IMR-90 (cell line): ENCODE measurements at regions of chr6 and their contacts with region 1.

Region 1: GRCh38 chr6:163413345-163414116 is 987 bp upstream of the QKI start:
- DNase-seq: peak; percentile 90
- ATAC-seq: peak; percentile 79
- H3K4me3 ChIP-seq: peak overlapping the region; percentile 100
- H3K27ac ChIP-seq: peak overlapping the region; percentile 78
- H3K4me1 ChIP-seq: peaks cover 2% of the 10 kb centered on the region; the same call in 1 of the 2 replicates
- H3K27me3 ChIP-seq: no peaks in the 10 kb centered on the region
- CTCF ChIP-seq: no peak
- POLR2A ChIP-seq: no peak; the same call in 1 of the 2 replicates
- RAD21 ChIP-seq: no peak

Region 2: DNA sequence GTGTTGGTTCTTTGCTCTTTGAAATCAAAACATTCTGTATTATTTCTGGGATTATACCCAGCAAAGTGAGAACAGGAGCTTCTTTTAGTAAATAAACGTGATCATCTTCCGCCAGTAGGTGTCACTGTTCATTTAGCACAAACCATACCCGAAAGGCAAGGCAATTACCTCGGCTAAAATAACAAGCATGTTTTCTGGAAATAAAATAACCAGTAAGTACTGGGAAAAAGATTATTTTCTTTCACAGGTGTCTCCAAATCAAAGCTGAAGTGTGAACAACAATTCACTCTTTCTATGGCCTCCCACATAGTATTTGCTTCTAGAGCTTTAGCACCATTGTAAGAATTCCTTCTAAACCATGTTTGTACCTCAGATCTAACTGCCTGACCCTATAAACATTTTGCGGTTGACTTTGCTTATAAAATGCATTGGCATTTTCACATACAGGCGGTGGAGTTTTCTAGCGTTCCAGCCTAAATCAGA is 1995.0 kb before region 1 on chr6:
- CTCF ChIA-PET with region 1: no interaction called
- POLR2A ChIA-PET with region 1: no interaction called
- dilution Hi-C with region 1: no loop called
- in situ Hi-C with region 1: loop called (anchors 25 kb)
- intact Hi-C with region 1: no loop called
- DNase-seq: peak; percentile 85
- ATAC-seq: peak; percentile 80
- H3K4me3 ChIP-seq: no peak overlapping the region
- H3K27ac ChIP-seq: no peak overlapping the region
- H3K4me1 ChIP-seq: peaks cover 2% of the 10 kb centered on the region; the same call in 1 of the 2 replicates
- H3K27me3 ChIP-seq: no peaks in the 10 kb centered on the region
- CTCF ChIP-seq: peak; percentile 74
- POLR2A ChIP-seq: no peak
- RAD21 ChIP-seq: peak; percentile 78

Region 3: DNA sequence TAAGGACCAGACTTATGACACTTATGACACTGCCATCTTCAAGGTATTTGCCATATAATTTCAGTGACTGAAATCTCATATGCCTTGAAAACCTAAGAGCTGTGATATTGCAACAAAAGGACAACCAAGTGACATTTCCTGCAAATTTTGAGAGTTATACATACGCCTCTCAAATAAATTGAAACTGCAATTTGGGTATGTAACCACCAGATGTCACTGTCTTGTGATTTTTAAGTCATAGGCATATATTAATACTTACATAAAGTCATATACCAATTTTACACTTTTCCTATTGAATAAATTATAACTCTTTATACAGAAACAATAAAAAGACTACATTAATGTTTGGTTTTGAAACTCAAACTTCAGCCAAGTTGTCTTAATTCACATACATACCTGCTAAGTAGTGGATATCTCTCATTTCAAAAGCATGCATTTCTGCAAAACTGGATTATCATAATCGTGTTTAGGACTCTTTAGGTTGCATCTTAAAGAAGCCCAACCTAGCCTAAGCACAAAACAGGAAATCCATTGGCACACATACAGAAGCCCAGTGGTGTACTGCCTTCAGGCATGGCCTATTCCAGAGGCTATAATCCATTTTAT is 505.6 kb before region 1 on chr6:
- CTCF ChIA-PET with region 1: no interaction called
- POLR2A ChIA-PET with region 1: no interaction called
- dilution Hi-C with region 1: no loop called
- in situ Hi-C with region 1: no loop called
- intact Hi-C with region 1: loop called (anchors 2 kb)
- DNase-seq: peak; percentile 45
- ATAC-seq: no peak
- H3K4me3 ChIP-seq: no peak overlapping the region
- H3K27ac ChIP-seq: no peak overlapping the region
- H3K4me1 ChIP-seq: no peaks in the 10 kb centered on the region
- H3K27me3 ChIP-seq: no peaks in the 10 kb centered on the region
- CTCF ChIP-seq: peak; percentile 35
- POLR2A ChIP-seq: no peak
- RAD21 ChIP-seq: peak; percentile 5; the same call in 1 of the 2 replicates

Region 4: GRCh38 chr6:163185744-163186143 is 227.8 kb before region 1 on chr6:
- CTCF ChIA-PET with region 1: no interaction called
- POLR2A ChIA-PET with region 1: interaction called, 13 read pairs
- dilution Hi-C with region 1: no loop called
- in situ Hi-C with region 1: no loop called
- intact Hi-C with region 1: no loop called
- DNase-seq: no peak
- ATAC-seq: no peak
- H3K4me3 ChIP-seq: no peak overlapping the region
- H3K27ac ChIP-seq: no peak overlapping the region
- H3K4me1 ChIP-seq: no peaks in the 10 kb centered on the region
- H3K27me3 ChIP-seq: no peaks in the 10 kb centered on the region
- CTCF ChIP-seq: no peak
- POLR2A ChIP-seq: no peak
- RAD21 ChIP-seq: no peak

Region 5: DNA sequence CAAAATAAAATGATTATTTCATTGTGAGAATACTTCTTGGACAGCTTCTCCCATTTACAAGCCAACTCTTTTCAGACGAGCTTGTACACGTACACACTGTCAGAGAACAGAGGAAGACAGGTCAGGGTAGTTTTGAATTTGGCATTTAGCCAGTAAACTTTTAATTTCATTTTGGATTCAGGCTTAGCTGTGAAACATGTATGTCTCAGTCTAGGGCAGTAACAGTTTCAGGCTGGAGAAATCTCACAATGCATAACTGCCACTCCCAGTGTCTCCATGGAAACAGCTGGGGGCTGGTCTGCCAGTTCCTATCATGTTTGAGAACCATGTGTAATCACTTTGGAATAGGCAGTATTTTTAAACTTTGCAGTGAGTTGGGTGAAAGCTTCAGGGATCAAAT is 21.0 kb before region 1 on chr6:
- CTCF ChIA-PET with region 1: no interaction called
- POLR2A ChIA-PET with region 1: no interaction called
- dilution Hi-C with region 1: no loop called
- in situ Hi-C with region 1: no loop called
- intact Hi-C with region 1: no loop called
- DNase-seq: peak; percentile 33
- ATAC-seq: peak; percentile 37
- H3K4me3 ChIP-seq: no peak overlapping the region
- H3K27ac ChIP-seq: no peak overlapping the region
- H3K4me1 ChIP-seq: peaks cover 3% of the 10 kb centered on the region
- H3K27me3 ChIP-seq: no peaks in the 10 kb centered on the region
- CTCF ChIP-seq: no peak
- POLR2A ChIP-seq: no peak
- RAD21 ChIP-seq: no peak

Region 6: DNA sequence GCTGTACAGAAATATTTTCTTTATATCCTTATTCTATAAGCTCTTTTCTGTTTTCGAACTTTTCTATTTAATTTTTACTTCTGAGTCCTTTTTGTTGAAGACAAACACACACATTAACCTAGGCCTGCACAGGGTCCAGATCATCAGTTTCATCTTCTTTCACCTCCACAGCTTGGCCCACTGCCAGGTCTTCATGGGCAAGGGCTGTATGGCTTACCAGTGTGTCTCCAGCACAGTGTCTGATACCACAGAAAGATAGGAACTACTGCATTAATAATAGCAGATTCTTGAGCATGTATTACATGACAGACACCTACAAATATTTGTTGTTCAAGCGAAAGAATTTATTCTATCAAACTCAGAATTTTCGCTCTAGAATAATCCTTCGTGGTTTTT is 25.4 kb after region 1 on chr6:
- CTCF ChIA-PET with region 1: no interaction called
- POLR2A ChIA-PET with region 1: no interaction called
- dilution Hi-C with region 1: no loop called
- in situ Hi-C with region 1: no loop called
- intact Hi-C with region 1: no loop called
- DNase-seq: no peak
- ATAC-seq: no peak
- H3K4me3 ChIP-seq: no peak overlapping the region
- H3K27ac ChIP-seq: no peak overlapping the region
- H3K4me1 ChIP-seq: peaks cover 2% of the 10 kb centered on the region; the same call in 1 of the 2 replicates
- H3K27me3 ChIP-seq: no peaks in the 10 kb centered on the region
- CTCF ChIP-seq: no peak
- POLR2A ChIP-seq: no peak
- RAD21 ChIP-seq: no peak

Region 7: GRCh38 chr6:163745536-163746400 is 332.2 kb after region 1 on chr6:
- CTCF ChIA-PET with region 1: no interaction called
- POLR2A ChIA-PET with region 1: no interaction called
- dilution Hi-C with region 1: no loop called
- in situ Hi-C with region 1: no loop called
- intact Hi-C with region 1: loop called (anchors 5 kb)
- DNase-seq: peak; percentile 92
- ATAC-seq: peak; percentile 98
- H3K4me3 ChIP-seq: no peak overlapping the region
- H3K27ac ChIP-seq: no peak overlapping the region
- H3K4me1 ChIP-seq: peaks cover 4% of the 10 kb centered on the region
- H3K27me3 ChIP-seq: no peaks in the 10 kb centered on the region
- CTCF ChIP-seq: no peak
- POLR2A ChIP-seq: no peak
- RAD21 ChIP-seq: 0 out of 2 replicates have a peak, but pooled peaks have one; percentile 2

Region 8: DNA sequence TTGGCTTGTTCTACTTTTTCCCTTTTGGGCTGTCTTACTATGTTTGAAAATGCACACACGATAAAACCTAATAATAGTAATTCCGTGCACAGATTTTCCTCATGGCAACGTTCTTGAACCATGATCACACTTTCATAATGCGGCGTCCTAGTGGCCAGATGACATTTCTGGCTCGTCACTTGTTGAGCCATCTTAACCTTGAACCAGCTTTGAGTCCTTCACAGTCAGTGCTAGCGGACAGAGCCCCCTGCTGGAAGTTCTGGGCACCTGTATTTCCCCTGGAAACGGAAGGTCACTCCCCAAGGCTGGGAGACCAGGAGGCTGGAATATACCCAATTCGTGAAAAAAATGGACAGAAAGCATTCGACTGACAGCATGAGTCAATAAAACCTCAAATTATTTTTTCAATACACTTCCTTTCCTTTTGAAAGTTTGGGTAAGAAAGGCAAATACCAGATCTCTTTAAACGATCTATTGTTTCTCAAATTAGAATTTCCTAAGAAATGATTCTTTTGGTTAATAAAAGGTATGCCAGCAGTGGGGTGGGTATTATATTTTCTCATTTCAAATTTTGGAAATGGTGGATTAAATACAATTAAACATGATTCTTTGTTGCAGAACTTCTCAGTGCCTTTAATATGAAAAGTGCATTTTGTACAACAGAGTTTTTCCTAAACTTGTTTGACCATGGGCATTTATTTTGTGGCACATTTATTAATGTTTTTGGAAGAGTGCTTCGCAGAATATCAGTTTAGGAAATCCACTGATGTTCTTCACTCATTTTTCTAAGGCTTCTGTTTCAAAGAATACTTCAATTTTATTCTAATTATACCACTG is 543.3 kb after region 1 on chr6:
- CTCF ChIA-PET with region 1: interaction called, 4 read pairs
- POLR2A ChIA-PET with region 1: no interaction called
- dilution Hi-C with region 1: no loop called
- in situ Hi-C with region 1: no loop called
- intact Hi-C with region 1: loop called (anchors 1 kb)
- DNase-seq: peak; percentile 78
- ATAC-seq: peak; percentile 73
- H3K4me3 ChIP-seq: no peak overlapping the region
- H3K27ac ChIP-seq: no peak overlapping the region
- H3K4me1 ChIP-seq: peaks cover 5% of the 10 kb centered on the region; the same call in 1 of the 2 replicates
- H3K27me3 ChIP-seq: no peaks in the 10 kb centered on the region
- CTCF ChIP-seq: peak; percentile 90
- POLR2A ChIP-seq: no peak
- RAD21 ChIP-seq: peak; percentile 94

Region 9: DNA sequence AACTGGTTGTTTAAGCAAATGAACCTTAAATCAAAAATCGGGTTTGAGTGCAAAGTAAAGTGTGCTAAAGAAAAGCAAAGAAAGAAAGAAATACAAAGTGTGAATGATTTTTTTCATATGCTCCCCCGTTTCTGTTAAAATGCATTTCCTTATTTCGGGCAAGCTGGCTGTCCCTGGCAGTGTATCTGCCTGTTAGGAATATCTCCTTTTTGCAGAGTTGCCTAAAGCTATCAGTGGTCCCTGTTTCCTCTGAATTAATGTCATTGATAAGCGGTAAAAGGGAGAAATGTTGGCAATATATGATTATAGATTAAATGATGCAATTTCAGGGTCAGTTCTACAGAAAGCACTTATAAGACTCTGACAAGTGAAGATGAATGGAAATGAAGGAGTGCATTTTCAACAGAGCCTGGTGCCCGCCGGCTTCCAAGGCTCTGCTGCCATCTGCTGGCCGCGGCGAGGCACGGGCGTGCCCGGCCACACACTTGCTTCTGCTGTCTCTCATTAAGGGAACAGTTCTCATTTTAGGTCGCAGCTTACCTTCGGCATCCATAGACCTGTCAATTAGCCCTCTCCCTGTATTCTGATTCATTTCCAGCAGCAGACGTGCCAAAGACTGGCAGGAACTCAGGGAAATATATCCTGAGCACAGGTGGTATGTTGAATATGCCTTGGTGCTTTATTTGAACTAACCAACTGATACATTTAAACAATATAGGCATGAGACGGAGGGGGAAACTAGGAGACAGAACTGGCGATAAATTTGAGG is 1513.9 kb after region 1 on chr6:
- CTCF ChIA-PET with region 1: no interaction called
- POLR2A ChIA-PET with region 1: no interaction called
- dilution Hi-C with region 1: no loop called
- in situ Hi-C with region 1: no loop called
- intact Hi-C with region 1: loop called (anchors 2 kb)
- DNase-seq: peak; percentile 27
- ATAC-seq: peak; percentile 96
- H3K4me3 ChIP-seq: no peak overlapping the region
- H3K27ac ChIP-seq: no peak overlapping the region
- H3K4me1 ChIP-seq: no peaks in the 10 kb centered on the region
- H3K27me3 ChIP-seq: no peaks in the 10 kb centered on the region
- CTCF ChIP-seq: peak; percentile 81
- POLR2A ChIP-seq: no peak
- RAD21 ChIP-seq: peak; percentile 85

Region 10: DNA sequence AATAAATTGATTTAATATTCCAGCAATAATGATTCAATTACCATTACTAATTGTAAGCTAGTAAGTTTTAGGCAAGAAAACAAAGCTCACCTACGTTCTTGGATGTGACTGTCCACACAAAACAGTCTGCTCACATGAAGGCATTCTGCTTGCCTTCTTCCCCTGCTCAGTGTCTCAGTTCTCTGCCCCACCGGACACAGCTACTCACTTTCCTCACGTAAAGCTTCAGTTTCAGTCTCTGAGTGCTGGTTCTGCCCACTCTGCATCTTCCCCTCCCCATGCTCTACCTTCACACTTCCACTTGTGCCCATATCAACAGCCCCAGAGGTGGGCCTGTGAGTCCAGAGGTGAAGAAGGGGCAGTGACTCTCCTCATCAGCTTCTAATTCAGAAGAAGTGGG is 1969.8 kb after region 1 on chr6:
- CTCF ChIA-PET with region 1: no interaction called
- POLR2A ChIA-PET with region 1: no interaction called
- dilution Hi-C with region 1: no loop called
- in situ Hi-C with region 1: no loop called
- intact Hi-C with region 1: no loop called
- DNase-seq: no peak
- ATAC-seq: no peak
- H3K4me3 ChIP-seq: no peak overlapping the region
- H3K27ac ChIP-seq: no peak overlapping the region
- H3K4me1 ChIP-seq: no peaks in the 10 kb centered on the region
- H3K27me3 ChIP-seq: no peaks in the 10 kb centered on the region
- CTCF ChIP-seq: no peak
- POLR2A ChIP-seq: no peak
- RAD21 ChIP-seq: no peak